Heart left ventricle (tissue), 16 donors: ENCODE measurements at regions of chr15 and their contacts with region 1.

Region 1: GRCh38 chr15:29090617-29091466 is 178.8 kb downstream of the NSMCE3 start:
- DNase-seq: peak in 1 of 5 donors; percentile 54
- ATAC-seq: peak in 2 of 4 donors; percentile 7 to 24
- H3K4me3 ChIP-seq: no peak overlapping the region
- H3K27ac ChIP-seq: no peak overlapping the region
- H3K4me1 ChIP-seq: no peaks in the 10 kb centered on the region
- H3K27me3 ChIP-seq: peaks cover 0 to 13% (median 0%) of the 10 kb centered on the region in 9 donors
- CTCF ChIP-seq: peak; percentile 52 to 66 (median 58)
- POLR2A ChIP-seq: no peak

Region 2: DNA sequence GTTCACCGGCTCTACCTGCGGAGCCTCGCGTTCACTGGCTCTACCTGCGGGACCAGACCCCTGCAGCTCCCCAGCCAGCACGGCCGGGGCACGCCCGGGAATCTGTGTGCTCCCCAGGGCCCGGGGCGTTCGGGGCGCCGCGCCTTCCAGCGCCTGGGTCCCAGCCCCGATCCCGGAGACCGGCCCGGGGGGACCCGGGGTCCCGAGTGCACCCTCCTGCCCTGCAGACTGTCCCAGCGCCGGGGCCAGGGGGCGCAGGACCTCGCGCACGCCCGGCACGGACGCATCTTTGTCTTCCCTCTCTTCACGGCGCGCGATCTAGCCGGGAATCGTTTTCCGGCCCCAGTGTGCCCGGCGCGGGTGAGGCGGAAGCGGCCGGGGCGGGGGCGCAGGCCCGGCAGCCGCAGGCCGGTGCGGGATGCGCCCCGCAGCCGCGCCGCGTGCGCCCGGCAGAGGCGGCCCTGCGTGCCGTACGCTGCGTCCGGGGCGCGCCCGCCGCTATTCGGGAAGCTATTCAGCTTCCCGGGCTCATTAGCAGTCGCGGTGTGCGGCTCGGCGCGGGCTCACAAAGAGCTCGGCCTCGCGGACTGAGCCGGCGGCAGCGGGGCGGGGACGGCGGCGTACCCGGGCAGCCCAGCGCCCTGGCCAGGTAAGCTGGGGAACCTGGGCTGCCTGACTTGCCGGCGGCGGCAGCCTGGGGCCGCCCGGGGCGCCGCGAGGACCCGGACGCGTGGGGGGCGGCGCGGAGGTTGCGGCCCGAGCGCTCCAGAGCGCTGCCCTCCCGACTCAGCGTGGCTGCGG is 205.0 kb before region 1 on chr15 and contains the start of gene APBA2:
- intact Hi-C with region 1: loop called in 1 of 10 experiments (anchors 10 kb)
- DNase-seq: no peak
- ATAC-seq: peak in 1 of 4 donors; percentile 20
- H3K4me3 ChIP-seq: peak within 1 kb of the TSS; percentile 17 to 61 (median 44)
- H3K27ac ChIP-seq: no peak within 1 kb of the TSS
- H3K4me1 ChIP-seq: peaks cover 0 to 16% (median 2%) of the 10 kb centered on the region in 12 donors
- H3K27me3 ChIP-seq: peaks cover 11 to 36% (median 21%) of the 10 kb centered on the region in 9 donors
- CTCF ChIP-seq: no peak
- POLR2A ChIP-seq: no peak
- total RNA-seq, gene APBA2: 0.16 to 1.3 (median 0.85) TPM in 7 of 9 donors, not detected in the others

Region 3: GRCh38 chr15:28901987-28902745 is 188.7 kb before region 1 on chr15:
- intact Hi-C with region 1: loop called in 1 of 10 experiments (anchors 10 kb)
- DNase-seq: no peak
- ATAC-seq: no peak
- H3K4me3 ChIP-seq: no peak overlapping the region
- H3K27ac ChIP-seq: no peak overlapping the region
- H3K4me1 ChIP-seq: no peaks in the 10 kb centered on the region
- H3K27me3 ChIP-seq: no peaks in the 10 kb centered on the region
- CTCF ChIP-seq: no peak
- POLR2A ChIP-seq: no peak

Region 4: DNA sequence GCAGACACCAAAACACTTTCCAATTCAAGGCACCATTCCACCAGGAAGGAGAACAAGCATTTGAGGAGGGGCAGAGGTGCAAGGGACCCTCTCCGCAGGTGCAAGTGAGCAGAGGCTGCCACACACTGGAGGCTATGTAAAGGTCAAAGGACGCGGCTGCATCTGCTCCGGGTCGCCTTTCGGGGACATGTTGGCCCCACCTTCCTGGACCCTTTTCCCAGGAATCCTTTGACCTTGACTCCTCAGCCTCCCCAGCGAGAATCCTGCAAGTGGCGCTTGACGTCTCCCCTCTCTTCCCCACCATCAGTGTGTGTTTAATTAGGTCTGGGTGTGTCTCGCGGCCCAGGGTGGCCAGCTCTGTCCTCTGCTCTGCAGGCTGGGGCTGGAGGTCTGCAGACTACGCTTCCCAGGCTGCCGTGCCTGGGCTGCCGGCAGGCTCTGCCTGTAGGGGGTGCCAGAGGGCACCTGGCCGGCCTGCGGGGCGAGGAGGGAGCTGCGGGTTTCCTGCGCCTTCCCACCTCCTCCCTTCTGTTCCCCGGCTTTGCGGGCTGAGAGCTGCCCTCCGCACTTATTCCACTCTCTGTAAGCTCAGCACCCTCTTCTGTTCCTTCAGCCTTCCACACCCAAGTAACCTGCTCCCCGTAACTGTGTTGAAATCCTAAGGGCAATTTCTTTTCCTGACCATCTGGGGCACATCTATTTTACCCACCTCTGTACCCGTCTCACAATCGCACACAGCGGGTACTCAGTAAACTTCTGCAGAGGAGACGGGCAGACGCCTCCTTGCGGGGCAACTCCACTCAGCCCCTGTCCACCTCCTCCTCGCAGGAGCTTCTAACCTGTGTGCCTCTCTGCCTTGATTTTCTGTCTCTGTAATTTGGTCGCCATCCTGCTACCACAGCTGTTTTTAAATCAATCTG is 49.0 kb after region 1 on chr15:
- intact Hi-C with region 1: loop called in 1 of 10 experiments (anchors 10 kb)
- DNase-seq: peak in 1 of 5 donors; percentile 45
- ATAC-seq: peak in 3 of 4 donors; percentile 67 to 92 (median 79)
- H3K4me3 ChIP-seq: no peak overlapping the region
- H3K27ac ChIP-seq: no peak overlapping the region
- H3K4me1 ChIP-seq: peaks cover 0 to 7% (median 0%) of the 10 kb centered on the region in 12 donors
- H3K27me3 ChIP-seq: peaks cover 0 to 36% (median 15%) of the 10 kb centered on the region in 9 donors
- CTCF ChIP-seq: peak; percentile 52 to 84 (median 71)
- POLR2A ChIP-seq: no peak